Prostate gland (tissue), 2 donors: ENCODE measurements at regions of chr1 and their contacts with region 1.

Region 1: DNA sequence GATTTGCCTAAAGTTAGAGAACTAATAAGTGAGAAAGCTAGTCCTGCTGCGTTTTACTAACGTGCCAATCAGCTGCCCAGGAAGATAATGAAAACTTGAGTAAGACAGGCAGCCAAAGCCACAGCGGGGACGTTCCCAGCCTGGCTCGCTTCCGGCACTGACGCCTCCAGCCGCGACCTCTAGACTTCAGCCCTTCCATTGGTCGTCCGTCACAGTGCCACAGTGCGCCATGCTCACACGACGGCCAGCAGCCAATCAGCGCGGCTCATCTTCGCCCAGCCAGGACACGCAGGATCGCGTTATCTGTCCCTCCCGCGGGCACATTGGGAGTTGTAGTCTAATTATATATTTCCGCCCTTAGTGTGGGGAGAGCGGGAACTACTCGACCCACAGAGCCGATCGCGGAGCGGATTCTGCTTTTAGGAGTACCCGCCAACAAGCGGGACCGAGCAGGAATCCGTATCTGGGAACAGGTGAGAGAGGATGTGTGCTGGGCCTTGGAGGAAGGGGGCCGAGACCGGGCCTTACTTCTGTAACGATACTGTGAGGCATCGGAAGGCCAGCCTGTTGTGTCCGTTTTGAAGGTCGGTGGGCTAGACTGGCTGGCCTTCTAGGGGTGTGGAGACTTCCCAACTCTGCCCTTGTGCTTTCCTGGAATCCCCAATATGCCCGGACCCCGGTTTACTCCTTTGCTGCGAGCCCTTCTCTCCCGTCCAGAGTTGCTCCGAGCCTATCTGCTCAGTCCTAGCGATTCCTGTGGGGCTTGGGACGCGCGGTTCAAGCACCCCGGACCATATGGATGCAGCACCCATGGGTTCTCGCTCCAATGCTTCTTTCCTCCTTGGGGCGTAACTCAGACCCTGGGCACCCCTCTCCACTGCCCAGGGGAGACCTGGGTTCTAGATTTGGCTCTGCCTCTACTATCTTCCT is at the start of gene FDPS:
- DNase-seq: peak; percentile 99
- H3K4me3 ChIP-seq: peak within 1 kb of the TSS; percentile 76 to 79
- H3K27ac ChIP-seq: peak within 1 kb of the TSS; percentile 89 to 92
- H3K4me1 ChIP-seq: peaks cover 5% of the 10 kb centered on the region
- H3K27me3 ChIP-seq: no peaks in the 10 kb centered on the region
- CTCF ChIP-seq: peak in 2 of 4 experiments; percentile 58 to 72
- POLR2A ChIP-seq: peak; percentile 62
- total RNA-seq, gene FDPS: 59.6 to 100 TPM

Region 2: GRCh38 chr1:155250633-155251449 is 57.9 kb before region 1 on chr1:
- intact Hi-C with region 1: loop called (anchors 5 kb)
- DNase-seq: peak; percentile 87
- H3K4me3 ChIP-seq: no peak overlapping the region
- H3K27ac ChIP-seq: no peak overlapping the region
- H3K4me1 ChIP-seq: peaks cover 9% of the 10 kb centered on the region
- H3K27me3 ChIP-seq: no peaks in the 10 kb centered on the region
- CTCF ChIP-seq: peak; percentile 94 to 100 (median 98)
- POLR2A ChIP-seq: no peak